SK-N-SH (cell line): ENCODE measurements at regions of chr2 and their contacts with region 1.

Region 1: DNA sequence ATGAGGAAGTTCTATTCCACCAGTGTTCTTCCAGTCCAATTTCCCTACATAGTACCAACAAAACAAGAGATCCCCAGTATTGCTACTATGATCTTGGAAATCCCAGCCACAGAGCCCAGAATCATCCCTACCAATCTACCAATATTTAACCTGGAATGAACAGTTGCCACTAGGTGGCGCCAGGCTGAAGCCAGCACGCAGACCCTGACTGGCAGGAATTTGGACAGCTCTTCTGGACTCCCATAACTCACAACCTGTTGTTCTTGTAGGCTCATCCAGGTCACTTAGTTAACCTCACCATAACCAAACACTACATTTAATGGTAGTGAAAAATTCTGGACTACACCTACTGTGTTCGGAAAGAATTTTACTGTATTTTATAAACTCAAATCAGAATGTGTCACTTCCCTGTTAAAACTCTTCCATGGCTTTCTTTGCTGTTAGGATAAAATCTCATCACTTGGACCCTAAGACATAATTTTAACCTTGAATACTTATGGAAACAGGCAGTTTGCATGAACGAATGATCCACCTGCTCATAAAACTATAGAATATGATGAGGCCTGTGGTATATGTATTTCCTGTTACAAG is 59.8 kb upstream of the SLC38A11 start:
- DNase-seq: peak; percentile 70
- H3K4me3 ChIP-seq: peak overlapping the region in 1 of 2 experiments; percentile 23; a peak in 1 of 4 replicates
- H3K27ac ChIP-seq: no peak overlapping the region
- H3K4me1 ChIP-seq: peaks cover 0 to 5% of the 10 kb centered on the region in 2 experiments; a peak in 2 of 4 replicates
- H3K27me3 ChIP-seq: no peaks in the 10 kb centered on the region
- CTCF ChIP-seq: peak; percentile 97
- EP300 ChIP-seq: no peak
- RAD21 ChIP-seq: peak; percentile 84

Region 2: DNA sequence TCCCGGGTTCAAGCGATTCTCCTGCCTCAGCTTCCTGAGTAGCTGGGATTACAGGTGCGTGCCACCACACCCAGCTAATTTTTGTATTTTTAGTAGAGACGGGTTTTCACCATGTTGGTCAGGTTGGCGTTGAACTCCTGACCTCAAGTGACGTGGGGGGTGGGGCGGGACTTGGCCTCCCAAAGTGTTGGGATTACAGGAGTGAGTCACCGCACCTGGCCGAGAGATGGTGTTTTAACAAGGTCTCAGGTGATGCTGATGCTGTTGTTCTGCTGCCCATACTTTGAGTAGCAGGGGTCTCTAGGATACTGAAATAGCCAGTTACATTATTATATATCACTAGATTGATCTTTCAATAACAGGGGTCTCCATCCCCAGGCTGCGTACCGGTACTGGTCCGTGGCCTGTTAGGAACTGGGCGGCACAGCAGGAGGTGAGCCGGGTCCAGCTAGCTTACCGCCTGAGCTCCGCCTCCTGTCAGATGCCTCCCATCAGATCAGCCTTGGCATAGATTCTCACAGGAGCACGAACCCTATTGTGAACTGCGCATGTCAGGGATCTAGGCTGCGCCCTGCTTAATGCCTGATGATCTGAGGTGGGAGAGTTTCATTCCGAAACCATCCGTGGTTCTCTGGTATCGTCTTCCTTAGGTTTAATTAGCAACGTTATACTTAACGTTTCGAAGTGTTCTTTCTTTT is 11.6 kb before region 1 on chr2:
- CTCF ChIA-PET with region 1: interaction called, 12 read pairs
- POLR2A ChIA-PET with region 1: no interaction called
- DNase-seq: no peak
- H3K4me3 ChIP-seq: no peak overlapping the region
- H3K27ac ChIP-seq: no peak overlapping the region
- H3K4me1 ChIP-seq: no peaks in the 10 kb centered on the region; a peak in 2 of 4 replicates
- H3K27me3 ChIP-seq: no peaks in the 10 kb centered on the region
- CTCF ChIP-seq: no peak
- EP300 ChIP-seq: no peak
- RAD21 ChIP-seq: no peak

Region 3: GRCh38 chr2:165114346-165114939 is 99.3 kb after region 1 on chr2:
- CTCF ChIA-PET with region 1: interaction called, 16 read pairs
- POLR2A ChIA-PET with region 1: no interaction called
- DNase-seq: no peak
- H3K4me3 ChIP-seq: peak overlapping the region; percentile 19 to 40; a peak in 3 of 4 replicates
- H3K27ac ChIP-seq: peak overlapping the region; percentile 67 to 94
- H3K4me1 ChIP-seq: peaks cover 10 to 29% of the 10 kb centered on the region in 2 experiments
- H3K27me3 ChIP-seq: no peaks in the 10 kb centered on the region
- CTCF ChIP-seq: no peak
- EP300 ChIP-seq: peak; percentile 28 to 59; a peak in 1 of 4 replicates
- RAD21 ChIP-seq: no peak

Region 4: GRCh38 chr2:165149439-165149838 is 134.3 kb after region 1 on chr2:
- CTCF ChIA-PET with region 1: interaction called, 11 read pairs
- POLR2A ChIA-PET with region 1: no interaction called
- DNase-seq: no peak
- H3K4me3 ChIP-seq: no peak overlapping the region
- H3K27ac ChIP-seq: no peak overlapping the region
- H3K4me1 ChIP-seq: no peaks in the 10 kb centered on the region; a peak in 1 of 4 replicates
- H3K27me3 ChIP-seq: no peaks in the 10 kb centered on the region
- CTCF ChIP-seq: no peak
- EP300 ChIP-seq: no peak
- RAD21 ChIP-seq: no peak

Region 5: DNA sequence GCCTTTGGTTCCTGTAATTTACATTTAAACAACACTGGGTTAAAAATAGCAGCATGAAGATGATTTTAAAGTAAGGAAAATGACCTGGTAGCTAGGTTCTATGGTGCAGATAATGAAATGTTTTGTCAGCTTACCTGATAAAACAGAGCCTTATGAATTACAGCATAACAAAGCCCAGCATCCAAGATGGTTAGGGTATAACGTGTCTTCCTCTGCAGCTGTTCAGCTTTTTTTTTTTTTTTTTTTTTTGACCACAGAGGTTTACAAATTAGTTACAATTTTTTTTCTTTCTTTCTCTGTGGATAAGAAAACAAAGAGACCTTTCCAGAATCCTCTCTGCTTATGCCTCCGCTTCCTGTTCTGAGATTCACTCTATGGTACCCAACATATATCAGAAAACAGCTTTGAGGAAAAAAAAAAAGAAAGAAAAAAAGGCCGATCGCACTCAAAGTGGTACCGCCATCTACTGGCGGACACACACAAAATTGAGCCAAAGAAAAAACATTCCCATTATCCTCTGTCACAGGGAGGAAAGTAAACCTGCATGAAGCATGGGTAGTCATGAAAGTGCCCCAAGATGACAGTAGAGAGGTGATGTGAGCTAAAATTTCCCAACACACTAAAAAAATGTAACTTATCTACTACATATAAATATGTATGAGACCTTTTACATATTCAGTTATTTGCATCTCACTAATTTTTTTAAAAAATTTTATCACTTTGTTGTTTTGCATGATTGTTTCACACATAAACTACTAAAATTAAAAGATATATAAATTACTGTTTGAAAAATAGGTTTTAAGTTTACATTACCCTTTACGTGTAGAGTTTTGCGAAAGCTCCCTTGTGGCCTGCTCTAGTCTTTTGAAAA is 188.8 kb after region 1 on chr2 and contains the start of gene SCN3A:
- CTCF ChIA-PET with region 1: interaction called, 300 read pairs
- POLR2A ChIA-PET with region 1: interaction called, 4 read pairs
- DNase-seq: peak; percentile 25
- H3K4me3 ChIP-seq: peak within 1 kb of the TSS; percentile 22 to 40; a peak in 3 of 4 replicates
- H3K27ac ChIP-seq: peak within 1 kb of the TSS in 1 of 2 experiments; percentile 72; a peak in 2 of 4 replicates
- H3K4me1 ChIP-seq: no peaks in the 10 kb centered on the region; a peak in 2 of 4 replicates
- H3K27me3 ChIP-seq: no peaks in the 10 kb centered on the region
- CTCF ChIP-seq: peak; percentile 87
- EP300 ChIP-seq: no peak
- RAD21 ChIP-seq: peak; percentile 93
- polyA plus RNA-seq, gene SCN3A: 0.33 and 0.97 TPM in 2 replicates

Region 6: GRCh38 chr2:165239230-165239629 is 224.1 kb after region 1 on chr2 and contains the start of gene SCN2A:
- CTCF ChIA-PET with region 1: interaction called, 27 read pairs
- POLR2A ChIA-PET with region 1: no interaction called
- DNase-seq: peak; percentile 33
- H3K4me3 ChIP-seq: peak within 1 kb of the TSS in 1 of 2 experiments; percentile 33; a peak in 3 of 4 replicates
- H3K27ac ChIP-seq: peak within 1 kb of the TSS in 1 of 2 experiments; percentile 68; a peak in 2 of 4 replicates
- H3K4me1 ChIP-seq: no peaks in the 10 kb centered on the region; a peak in 1 of 4 replicates
- H3K27me3 ChIP-seq: no peaks in the 10 kb centered on the region
- CTCF ChIP-seq: peak; percentile 85
- EP300 ChIP-seq: no peak
- RAD21 ChIP-seq: peak; percentile 91
- polyA plus RNA-seq, gene SCN2A: 5.1 and 7.3 TPM in 2 replicates

Region 7: DNA sequence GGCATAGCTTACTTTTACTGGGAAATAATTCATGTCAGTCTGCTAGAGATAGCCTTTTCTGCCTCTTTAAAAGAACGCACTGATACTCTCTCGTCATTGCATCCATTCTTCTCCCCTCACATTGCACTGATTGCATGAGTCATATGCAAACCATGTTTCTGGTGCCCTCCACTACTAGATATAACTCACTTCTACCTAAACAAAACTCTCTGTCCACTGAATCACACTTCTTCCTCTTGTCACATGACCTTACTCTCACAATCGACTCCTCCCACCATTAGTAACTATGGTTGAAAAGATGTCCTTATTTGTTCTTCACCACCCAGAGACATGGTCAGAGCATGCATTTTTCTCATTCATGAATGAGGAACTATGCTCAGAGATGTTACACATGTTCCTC is 612.3 kb after region 1 on chr2:
- CTCF ChIA-PET with region 1: no interaction called
- POLR2A ChIA-PET with region 1: no interaction called
- DNase-seq: no peak
- H3K4me3 ChIP-seq: no peak overlapping the region
- H3K27ac ChIP-seq: peak overlapping the region in 1 of 2 experiments; percentile 28; a peak in 2 of 4 replicates
- H3K4me1 ChIP-seq: peaks cover 4 to 16% of the 10 kb centered on the region in 2 experiments
- H3K27me3 ChIP-seq: no peaks in the 10 kb centered on the region
- CTCF ChIP-seq: no peak
- EP300 ChIP-seq: no peak
- RAD21 ChIP-seq: no peak